ENCODE measurements at regions of chr20 and their contacts with region 1.

Region 1: DNA sequence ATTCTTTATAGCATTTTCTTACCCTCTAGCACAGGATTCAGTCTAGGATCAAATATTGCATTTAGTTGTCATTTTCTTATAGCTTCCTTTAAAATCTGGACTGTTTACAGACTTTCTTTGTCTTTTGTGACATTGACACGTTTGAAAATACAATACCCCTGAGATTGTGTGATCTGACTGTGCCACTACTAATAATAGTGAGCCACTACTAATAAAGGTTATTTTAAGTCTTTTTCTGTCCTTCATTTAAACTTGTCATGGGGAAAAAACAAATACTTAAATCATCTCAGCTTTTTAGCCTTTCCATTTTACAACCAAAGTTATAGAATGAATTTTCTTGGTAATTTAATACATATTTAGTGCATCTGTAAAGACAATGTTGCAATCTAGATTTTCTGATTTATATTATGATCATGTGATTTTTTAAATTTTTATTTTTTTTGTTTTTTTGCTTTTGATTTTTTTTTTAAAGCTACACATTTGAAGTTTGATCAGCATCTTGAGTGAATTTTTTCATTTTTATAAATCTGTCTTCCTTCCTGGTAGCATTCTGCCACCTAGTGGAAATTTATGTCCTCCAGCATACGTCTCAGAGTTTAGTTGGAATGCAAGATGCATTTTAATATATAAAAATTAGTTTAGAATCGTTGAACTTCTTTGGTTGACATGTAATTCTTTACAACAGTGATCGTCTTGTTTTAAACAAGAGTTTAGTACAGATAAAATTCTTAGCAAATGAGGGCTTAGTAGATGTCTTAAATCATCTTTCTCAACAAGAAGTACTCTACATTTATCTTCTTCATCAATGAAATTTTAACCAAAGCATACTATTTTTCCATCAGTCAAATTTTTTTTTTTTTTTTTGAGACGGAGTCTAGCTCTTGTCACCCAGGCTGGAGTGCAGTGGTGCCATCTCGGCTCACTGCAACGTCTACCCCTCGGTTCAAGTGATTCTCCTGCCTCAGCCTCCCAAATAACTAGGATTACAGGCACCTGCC is 119.4 kb downstream of the NCOA3 start:
- DNase-seq: no peak
- H3K4me3 ChIP-seq: no peak overlapping the region
- H3K27ac ChIP-seq: no peak overlapping the region
- H3K27me3 ChIP-seq: no peaks in the 10 kb centered on the region
- CTCF ChIP-seq: peak; percentile 73 to 96 (median 87)

Region 2: GRCh38 chr20:46752728-46753127 is 868.4 kb before region 1 on chr20:
- intact Hi-C with region 1: loop called in 1 of 2 experiments (anchors 5 kb)
- DNase-seq: peak in 8 of 10 donors; percentile 8 to 77 (median 49)
- H3K4me3 ChIP-seq: peak overlapping the region in 8 of 59 donors; percentile 2 to 43 (median 16)
- H3K27ac ChIP-seq: no peak overlapping the region
- H3K27me3 ChIP-seq: peaks cover 0 to 7% (median 0%) of the 10 kb centered on the region in 45 donors
- CTCF ChIP-seq: peak; percentile 55 to 84 (median 73)

Region 3: DNA sequence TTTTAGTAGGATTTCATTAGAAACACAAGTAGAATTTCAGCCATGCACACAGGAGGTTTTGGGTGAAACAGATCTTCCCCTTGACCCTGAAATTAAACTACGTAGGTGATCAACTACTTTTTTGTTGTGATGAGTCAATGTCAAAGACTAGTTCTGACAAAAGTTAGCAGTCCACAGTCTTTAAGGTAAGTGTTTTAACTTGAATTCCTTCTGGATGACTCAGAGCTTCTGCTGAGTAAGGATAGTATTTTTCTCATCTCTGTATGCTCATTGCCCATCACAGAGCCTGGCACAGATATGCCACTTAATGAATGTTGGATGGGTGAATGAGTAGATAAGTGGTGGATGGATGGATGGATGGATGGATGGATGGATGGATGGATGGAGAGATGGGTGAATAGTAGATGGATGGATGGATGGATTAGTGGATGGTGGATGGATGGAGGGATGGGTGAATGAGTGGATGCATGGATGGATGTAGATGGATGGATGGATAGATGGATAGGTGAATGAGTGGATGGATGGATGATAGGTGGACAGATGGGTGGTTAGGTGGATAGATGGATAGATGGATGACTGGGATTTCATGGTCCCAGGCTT is 429.9 kb before region 1 on chr20:
- intact Hi-C with region 1: loop called (anchors 2 kb)
- DNase-seq: no peak
- H3K4me3 ChIP-seq: no peak overlapping the region
- H3K27ac ChIP-seq: no peak overlapping the region
- H3K27me3 ChIP-seq: peaks cover 0 to 3% (median 0%) of the 10 kb centered on the region in 45 donors
- CTCF ChIP-seq: no peak